Ascending aorta (tissue), 2 donors: ENCODE measurements at regions of chr1 and their contacts with region 1.

Region 1: DNA sequence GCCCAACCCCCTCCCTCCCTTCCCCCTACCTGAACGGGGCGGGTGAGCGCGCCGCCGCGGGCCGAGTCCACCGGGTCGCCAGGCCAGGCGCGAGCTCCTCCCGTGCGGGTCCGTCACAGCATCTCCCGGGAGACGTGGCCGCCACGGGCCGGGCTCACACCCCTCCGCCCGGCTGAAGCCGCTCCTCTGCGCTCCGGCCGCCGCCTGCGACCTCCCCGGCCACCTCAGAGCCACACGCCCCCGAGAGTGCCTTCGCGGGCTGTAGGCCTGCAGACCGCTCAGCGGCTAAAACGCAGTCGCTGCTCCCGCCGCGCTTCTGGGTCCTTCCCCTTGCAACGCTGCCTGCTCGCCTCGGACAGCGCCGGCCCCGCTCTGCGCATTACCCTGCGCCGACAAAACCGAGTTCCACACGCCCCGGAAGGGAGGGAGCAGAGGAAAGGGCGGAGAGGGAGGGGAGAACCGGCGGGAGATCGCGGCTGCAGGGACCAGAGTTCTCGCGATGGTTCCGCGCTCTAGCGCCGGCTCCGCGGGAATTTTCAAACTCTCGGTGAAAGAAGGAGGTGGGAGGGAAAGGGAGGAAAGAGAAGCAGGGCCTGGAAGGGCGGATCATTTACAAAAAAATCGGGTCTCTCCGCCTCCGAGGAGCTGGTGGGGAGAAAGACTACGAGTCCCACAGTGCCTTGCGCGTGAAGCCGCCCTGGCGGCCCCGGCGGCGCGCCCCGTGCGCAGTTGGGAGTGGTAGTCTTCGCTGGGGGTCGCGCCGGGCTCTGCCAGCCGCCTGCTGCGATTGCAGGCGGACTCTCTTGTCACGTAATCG is at the start of gene AHCTF1:
- DNase-seq: peak; percentile 87 to 98
- H3K4me3 ChIP-seq: peak within 1 kb of the TSS; percentile 95 to 98
- H3K27ac ChIP-seq: peak within 1 kb of the TSS; percentile 96 to 98
- H3K4me1 ChIP-seq: peaks cover 4 to 19% of the 10 kb centered on the region in 2 donors
- H3K27me3 ChIP-seq: no peaks in the 10 kb centered on the region
- CTCF ChIP-seq: peak in 1 of 3 experiments; percentile 7
- total RNA-seq, gene AHCTF1: 16.5 TPM

Region 2: GRCh38 chr1:246947255-246947654 is 15.5 kb after region 1 on chr1:
- intact Hi-C with region 1: loop called (anchors 1 kb)
- DNase-seq: peak; percentile 67 to 94
- H3K4me3 ChIP-seq: peak overlapping the region in 1 of 2 donors; percentile 8
- H3K27ac ChIP-seq: peak overlapping the region; percentile 80 to 89
- H3K4me1 ChIP-seq: peaks cover 8 to 21% of the 10 kb centered on the region in 2 donors
- H3K27me3 ChIP-seq: no peaks in the 10 kb centered on the region
- CTCF ChIP-seq: no peak

Region 3: DNA sequence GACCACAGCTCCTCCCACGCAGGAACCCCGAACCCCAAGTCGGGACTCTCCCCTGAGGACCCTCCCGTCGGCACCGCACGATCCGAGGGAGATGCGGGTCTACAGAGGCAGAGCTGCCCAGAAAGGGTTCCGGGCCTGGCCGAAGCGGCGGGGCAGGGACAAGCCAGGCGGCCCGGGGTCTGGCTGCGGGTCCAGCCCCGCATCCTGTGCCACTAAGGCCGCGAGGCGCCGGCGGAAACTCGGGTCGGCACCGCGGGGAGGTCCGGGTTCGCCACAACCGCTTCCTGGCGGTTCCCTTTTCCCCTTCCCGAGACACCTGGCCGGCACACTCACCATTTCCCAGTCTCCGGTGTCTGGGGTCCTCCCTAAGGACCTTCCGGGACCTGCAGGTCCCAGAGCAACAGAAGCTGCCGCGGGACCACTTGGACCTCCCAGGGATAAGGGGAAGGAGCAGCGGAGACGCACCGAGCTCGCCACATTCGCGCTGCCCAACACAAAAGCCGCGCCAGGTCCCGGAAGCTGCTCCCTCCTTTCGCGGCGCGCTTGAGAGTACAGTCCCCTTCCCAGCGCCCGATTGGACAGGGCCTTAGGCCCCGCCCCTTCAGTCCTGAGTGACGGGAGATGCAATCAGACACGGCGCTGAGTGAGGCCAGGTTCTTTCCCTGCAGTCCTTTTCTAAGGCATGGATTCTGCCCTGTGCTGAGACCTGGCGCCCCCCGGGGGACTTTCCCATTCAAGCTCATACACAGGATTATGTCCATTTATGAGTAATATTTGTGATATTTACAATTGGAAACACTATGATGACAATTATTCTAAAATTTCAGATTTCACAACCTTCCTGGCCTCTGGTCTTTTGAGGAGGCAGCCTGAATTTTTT is 146.7 kb after region 1 on chr1 and contains the start of gene ZNF670:
- intact Hi-C with region 1: loop called (anchors 5 kb)
- DNase-seq: peak; percentile 88 to 98
- H3K4me3 ChIP-seq: peak within 1 kb of the TSS; percentile 77 to 78
- H3K27ac ChIP-seq: peak within 1 kb of the TSS; percentile 71
- H3K4me1 ChIP-seq: peaks cover 0 to 10% of the 10 kb centered on the region in 2 donors
- H3K27me3 ChIP-seq: no peaks in the 10 kb centered on the region
- CTCF ChIP-seq: peak in 1 of 3 experiments; percentile 12
- total RNA-seq, gene ZNF670: not detected

Region 4: GRCh38 chr1:247089616-247090375 is 158.0 kb after region 1 on chr1:
- intact Hi-C with region 1: no loop called
- DNase-seq: no peak
- H3K4me3 ChIP-seq: no peak overlapping the region
- H3K27ac ChIP-seq: no peak overlapping the region
- H3K4me1 ChIP-seq: no peaks in the 10 kb centered on the region
- H3K27me3 ChIP-seq: no peaks in the 10 kb centered on the region
- CTCF ChIP-seq: no peak

Region 5: DNA sequence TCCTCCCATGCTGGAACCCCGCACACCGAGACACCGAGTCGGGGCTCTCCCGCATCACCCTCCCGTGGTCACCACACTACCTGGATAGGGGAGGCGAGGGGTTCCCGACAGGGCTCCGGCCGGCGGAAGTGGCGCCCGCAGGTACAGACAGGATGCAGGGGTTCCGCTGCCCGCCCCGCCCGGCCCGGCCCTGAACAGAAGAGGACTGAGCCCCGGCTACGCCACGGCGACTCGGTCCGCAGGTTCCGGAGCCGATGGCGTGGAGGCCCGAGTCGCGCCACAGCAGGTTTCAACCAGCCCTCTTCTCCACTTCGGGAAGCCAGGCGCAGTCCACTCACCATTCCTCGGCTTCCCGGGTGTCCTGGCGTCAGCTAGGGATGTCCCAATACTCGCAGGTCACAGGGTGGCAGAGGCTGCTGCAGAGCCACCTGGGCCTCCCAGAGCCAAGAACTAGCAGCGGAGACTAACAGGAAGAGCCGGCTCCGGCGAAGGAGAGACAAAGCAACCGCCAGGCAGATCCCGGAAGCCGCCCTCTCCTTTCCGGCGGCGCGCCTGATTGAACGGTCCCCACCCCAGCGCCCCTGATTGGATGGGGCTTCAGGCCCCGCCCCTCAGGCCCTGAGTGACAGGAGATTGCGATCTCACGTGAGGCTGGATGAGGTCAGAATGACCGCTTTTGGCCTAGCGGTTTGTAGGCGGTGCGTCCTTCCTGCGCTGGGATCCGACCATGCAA is 172.3 kb after region 1 on chr1 and contains the start of gene ZNF669:
- intact Hi-C with region 1: loop called (anchors 5 kb)
- DNase-seq: peak; percentile 92 to 99
- H3K4me3 ChIP-seq: peak within 1 kb of the TSS; percentile 63 to 75
- H3K27ac ChIP-seq: peak within 1 kb of the TSS; percentile 67 to 86
- H3K4me1 ChIP-seq: peaks cover 0 to 13% of the 10 kb centered on the region in 2 donors
- H3K27me3 ChIP-seq: no peaks in the 10 kb centered on the region
- CTCF ChIP-seq: peak in 1 of 3 experiments; percentile 10
- total RNA-seq, gene ZNF669: 0.64 TPM

Region 6: DNA sequence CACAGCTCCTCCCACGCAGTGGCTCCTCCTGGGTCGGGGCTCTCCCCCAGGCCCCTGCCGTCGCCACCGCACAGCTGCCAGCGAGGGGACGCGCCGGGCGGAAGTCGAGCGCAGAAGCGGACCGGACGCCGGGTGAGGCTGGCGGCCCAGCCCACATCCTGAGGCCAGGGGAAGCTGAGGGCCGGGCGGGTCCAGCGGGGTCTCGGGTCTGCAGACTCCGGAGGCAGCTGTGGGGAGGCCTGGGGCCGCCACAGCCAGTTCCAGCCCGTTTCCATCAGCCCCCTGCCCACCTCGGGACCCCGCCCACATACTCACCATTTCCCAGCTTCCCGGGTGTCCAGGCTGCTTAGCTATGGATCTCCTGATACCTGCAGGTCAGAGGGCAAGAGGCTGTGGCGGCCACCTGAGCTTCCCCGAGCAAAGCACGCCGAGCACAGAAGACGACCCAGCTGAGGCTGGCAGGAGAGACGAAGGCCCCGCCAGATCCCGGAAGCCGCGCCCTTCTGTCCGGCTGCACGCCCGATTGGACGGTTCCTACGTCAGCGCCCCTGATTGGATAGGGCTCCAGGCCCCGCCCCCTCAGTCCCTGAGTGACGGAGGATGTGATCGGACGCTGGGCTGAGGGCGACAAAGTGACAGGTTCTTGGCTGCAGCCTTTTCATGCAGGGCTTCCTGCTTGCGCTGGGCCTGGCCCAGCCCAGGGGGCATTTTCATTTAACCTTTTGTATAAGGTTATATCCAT is 278.8 kb after region 1 on chr1:
- intact Hi-C with region 1: loop called (anchors 5 kb)
- DNase-seq: peak; percentile 90 to 99
- H3K4me3 ChIP-seq: peak overlapping the region; percentile 73 to 93
- H3K27ac ChIP-seq: peak overlapping the region; percentile 89 to 90
- H3K4me1 ChIP-seq: peaks cover 4 to 14% of the 10 kb centered on the region in 2 donors
- H3K27me3 ChIP-seq: no peaks in the 10 kb centered on the region
- CTCF ChIP-seq: no peak

Region 7: DNA sequence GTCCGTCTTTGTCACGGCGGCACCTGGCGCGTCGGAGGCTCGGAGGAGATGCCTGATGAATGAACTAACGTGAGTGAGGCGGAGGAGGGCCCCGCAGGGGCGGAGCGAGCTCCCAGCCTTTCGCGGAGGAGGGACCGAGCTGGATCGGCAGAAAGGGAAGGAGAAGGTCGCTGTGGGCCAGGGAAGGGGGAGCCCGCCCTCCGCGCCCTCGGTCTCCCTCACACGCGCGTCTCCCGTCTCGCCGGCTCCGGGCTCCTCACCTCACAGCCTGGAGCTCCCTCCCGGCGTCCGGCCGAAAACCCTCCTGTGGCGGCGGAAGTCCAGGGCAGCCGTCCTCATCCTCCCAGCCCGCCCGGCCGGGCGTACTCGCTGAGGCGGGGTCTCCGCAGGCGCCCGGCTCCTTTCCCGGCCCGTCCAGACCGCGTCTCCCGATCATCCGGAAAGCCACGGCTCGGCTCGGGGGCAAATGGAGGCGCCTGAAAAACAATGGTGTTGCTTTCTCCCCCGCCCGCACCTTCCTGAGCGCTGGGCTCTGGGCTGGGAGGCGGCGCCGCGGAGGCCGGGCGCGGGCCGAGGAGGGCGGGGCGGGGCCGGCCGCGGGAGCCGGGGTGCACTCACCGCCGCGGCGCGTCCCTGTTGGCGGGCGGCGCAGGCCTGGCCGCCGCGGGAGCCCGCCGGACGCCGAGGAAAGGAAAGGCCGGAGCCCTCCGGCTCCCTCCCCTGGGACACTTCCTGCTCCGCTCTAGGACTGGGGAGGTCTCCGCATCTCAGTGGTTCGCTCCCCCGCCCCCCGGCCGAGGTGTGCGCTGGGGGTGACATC is 399.6 kb after region 1 on chr1 and contains the start of gene ZNF496:
- intact Hi-C with region 1: loop called (anchors 1 kb)
- DNase-seq: peak; percentile 35 to 87
- H3K4me3 ChIP-seq: peak within 1 kb of the TSS; percentile 91 to 100
- H3K27ac ChIP-seq: peak within 1 kb of the TSS; percentile 92 to 98
- H3K4me1 ChIP-seq: peaks cover 7% of the 10 kb centered on the region in 2 donors
- H3K27me3 ChIP-seq: no peaks in the 10 kb centered on the region
- CTCF ChIP-seq: no peak
- total RNA-seq, gene ZNF496: 38.5 TPM

Region 8: GRCh38 chr1:248837794-248838356 is 1906.1 kb after region 1 on chr1 and contains the start of gene ZNF672:
- intact Hi-C with region 1: loop called (anchors 5 kb)
- DNase-seq: peak; percentile 98 to 100
- H3K4me3 ChIP-seq: peak within 1 kb of the TSS; percentile 83 to 88
- H3K27ac ChIP-seq: peak within 1 kb of the TSS; percentile 100
- H3K4me1 ChIP-seq: peaks cover 0 to 25% of the 10 kb centered on the region in 2 donors
- H3K27me3 ChIP-seq: no peaks in the 10 kb centered on the region
- CTCF ChIP-seq: no peak
- total RNA-seq, gene ZNF672: 30.9 TPM